Ascending aorta (tissue), 2 donors: ENCODE measurements at regions of chrX and their contacts with region 1.

Region 1: DNA sequence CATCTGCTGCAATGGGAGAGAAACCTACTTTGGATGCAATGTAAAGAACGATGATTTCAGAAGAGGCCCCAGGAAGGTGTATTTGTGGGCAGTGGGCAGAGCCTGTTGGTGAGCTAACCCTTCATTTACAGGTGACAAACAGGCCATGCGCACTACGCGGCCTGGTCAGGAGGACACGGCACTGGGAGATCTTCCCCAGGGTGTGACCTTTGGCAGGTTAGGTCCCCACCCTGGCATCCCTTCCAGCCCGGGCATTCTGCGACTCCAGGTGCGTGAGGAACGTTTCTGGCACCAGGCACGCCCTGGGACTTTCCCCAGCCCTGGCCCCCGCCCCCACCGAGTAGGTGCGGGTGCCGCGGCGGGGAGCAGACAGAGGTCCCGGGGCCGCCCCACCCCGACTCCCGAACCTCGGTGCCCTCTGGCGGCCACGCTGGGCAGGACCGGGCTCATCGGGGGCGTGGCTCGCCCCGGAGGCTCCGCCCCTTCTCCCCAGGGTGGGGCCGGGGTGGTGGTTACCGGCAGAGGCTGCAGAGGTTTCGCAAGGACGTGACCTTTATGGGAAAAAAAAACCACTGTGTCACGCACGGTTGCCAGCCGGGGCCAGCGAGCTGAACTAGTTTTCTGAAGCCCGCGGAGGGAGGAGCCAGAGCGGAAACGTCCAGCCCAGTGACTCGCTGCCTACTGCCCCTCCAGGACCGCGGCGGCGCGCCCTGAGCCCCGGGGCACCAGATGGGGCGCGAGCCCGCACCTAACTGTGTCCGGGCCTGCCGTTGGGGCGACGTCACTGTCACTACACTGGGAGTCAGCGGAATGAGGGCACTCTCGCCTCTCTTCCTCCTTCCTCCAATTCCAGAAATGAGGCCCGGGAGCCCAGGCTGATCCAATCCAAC is 5.0 kb upstream of the NYX start:
- DNase-seq: peak; percentile 70 to 94
- H3K4me3 ChIP-seq: peak overlapping the region in 1 of 2 donors; percentile 47
- H3K27ac ChIP-seq: peak overlapping the region; percentile 49 to 78
- H3K4me1 ChIP-seq: no peaks in the 10 kb centered on the region
- H3K27me3 ChIP-seq: no peaks in the 10 kb centered on the region
- CTCF ChIP-seq: peak; percentile 39 to 66 (median 60)

Region 2: DNA sequence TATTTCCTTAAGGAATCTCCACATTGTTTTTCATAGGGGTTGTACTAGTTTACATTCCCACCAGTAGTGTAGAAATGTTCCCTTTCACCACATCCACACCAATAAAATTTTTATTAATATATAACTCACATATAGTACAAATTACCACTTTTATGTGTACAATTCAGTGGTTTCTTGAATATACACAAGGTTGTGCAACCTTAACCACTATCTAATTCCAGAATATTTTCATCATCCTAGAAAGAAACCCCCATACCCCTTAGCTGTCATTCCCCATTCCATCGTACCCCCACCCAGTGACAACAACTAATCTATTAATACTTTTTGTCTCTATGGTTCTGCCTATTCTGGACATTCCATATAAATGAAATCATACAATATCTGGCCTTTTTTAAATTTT is 465.2 kb before region 1 on chrX:
- intact Hi-C with region 1: no loop called
- DNase-seq: no peak
- H3K4me3 ChIP-seq: no peak overlapping the region
- H3K27ac ChIP-seq: no peak overlapping the region
- H3K4me1 ChIP-seq: no peaks in the 10 kb centered on the region
- H3K27me3 ChIP-seq: no peaks in the 10 kb centered on the region
- CTCF ChIP-seq: no peak

Region 3: DNA sequence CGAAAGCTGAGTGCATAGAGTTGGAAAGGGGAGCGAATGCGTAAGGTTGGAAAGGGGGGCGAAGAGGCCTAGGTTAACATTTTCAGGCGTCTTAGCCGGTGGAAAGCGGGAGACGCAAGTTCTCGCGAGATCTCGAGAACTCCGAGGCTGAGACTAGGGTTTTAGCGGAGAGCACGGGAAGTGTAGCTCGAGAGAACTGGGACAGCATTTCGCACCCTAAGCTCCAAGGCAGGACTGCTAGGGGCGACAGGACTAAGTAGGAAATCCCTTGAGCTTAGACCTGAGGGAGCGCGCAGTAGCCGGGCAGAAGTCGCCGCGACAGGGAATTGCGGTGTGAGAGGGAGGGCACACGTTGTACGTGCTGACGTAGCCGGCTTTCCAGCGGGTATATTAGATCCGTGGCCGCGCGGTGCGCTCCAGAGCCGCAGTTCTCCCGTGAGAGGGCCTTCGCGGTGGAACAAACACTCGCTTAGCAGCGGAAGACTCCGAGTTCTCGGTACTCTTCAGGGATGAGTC is 108.4 kb before region 1 on chrX and contains the start of gene DDX3X:
- intact Hi-C with region 1: loop called (anchors 2 kb)
- DNase-seq: peak; percentile 60 to 93
- H3K4me3 ChIP-seq: peak within 1 kb of the TSS; percentile 82 to 99
- H3K27ac ChIP-seq: peak within 1 kb of the TSS; percentile 99 to 100
- H3K4me1 ChIP-seq: peaks cover 0 to 11% of the 10 kb centered on the region in 2 donors
- H3K27me3 ChIP-seq: no peaks in the 10 kb centered on the region
- CTCF ChIP-seq: peak; percentile 28 to 63 (median 47)
- total RNA-seq, gene DDX3X: 89.3 TPM

Region 4: GRCh38 chrX:41664307-41665299 is 222.4 kb after region 1 on chrX:
- intact Hi-C with region 1: loop called (anchors 10 kb)
- DNase-seq: no peak
- H3K4me3 ChIP-seq: no peak overlapping the region
- H3K27ac ChIP-seq: peak overlapping the region; percentile 22 to 65
- H3K4me1 ChIP-seq: peaks cover 0 to 31% of the 10 kb centered on the region in 2 donors
- H3K27me3 ChIP-seq: no peaks in the 10 kb centered on the region
- CTCF ChIP-seq: no peak

Region 5: GRCh38 chrX:41705680-41706374 is 263.6 kb after region 1 on chrX:
- intact Hi-C with region 1: loop called (anchors 10 kb)
- DNase-seq: no peak
- H3K4me3 ChIP-seq: no peak overlapping the region
- H3K27ac ChIP-seq: peak overlapping the region in 1 of 2 donors; percentile 28
- H3K4me1 ChIP-seq: no peaks in the 10 kb centered on the region
- H3K27me3 ChIP-seq: no peaks in the 10 kb centered on the region
- CTCF ChIP-seq: no peak